ENCODE measurements at regions of chr15 and their contacts with region 1.

Region 1: GRCh38 chr15:86432861-86433260 is 353.2 kb downstream of the AGBL1 start:
- DNase-seq: no peak
- H3K4me3 ChIP-seq: no peak overlapping the region
- H3K27ac ChIP-seq: no peak overlapping the region
- H3K4me1 ChIP-seq: no peaks in the 10 kb centered on the region
- H3K27me3 ChIP-seq: no peaks in the 10 kb centered on the region
- CTCF ChIP-seq: no peak

Region 2: GRCh38 chr15:86373147-86373546 is 59.7 kb before region 1 on chr15:
- CTCF ChIA-PET with region 1: no interaction called
- POLR2A ChIA-PET with region 1: no interaction called
- intact Hi-C with region 1: loop called (anchors 10 kb)
- DNase-seq: no peak
- H3K4me3 ChIP-seq: no peak overlapping the region
- H3K27ac ChIP-seq: no peak overlapping the region
- H3K4me1 ChIP-seq: no peaks in the 10 kb centered on the region
- H3K27me3 ChIP-seq: no peaks in the 10 kb centered on the region
- CTCF ChIP-seq: no peak

Region 3: DNA sequence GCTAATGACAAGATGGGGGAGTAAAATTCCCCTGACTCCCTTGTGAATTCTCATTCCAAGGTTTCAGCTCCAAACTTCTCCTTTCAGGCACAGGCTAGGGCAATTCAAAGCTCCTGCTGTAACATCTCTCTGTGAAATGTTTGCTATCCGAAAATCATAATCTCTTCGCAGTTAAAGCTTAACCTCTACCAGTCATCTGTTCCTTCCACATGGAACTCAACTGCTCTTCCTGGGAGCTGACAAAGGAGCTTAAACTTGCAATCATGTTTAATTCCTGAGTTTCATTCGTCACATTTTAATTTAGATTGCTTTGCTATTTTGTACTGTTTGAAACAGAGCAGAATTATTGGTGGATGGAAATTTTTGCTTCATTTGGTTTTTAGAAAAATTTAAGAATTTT is 24.6 kb before region 1 on chr15:
- CTCF ChIA-PET with region 1: interaction called, 20 read pairs
- POLR2A ChIA-PET with region 1: no interaction called
- intact Hi-C with region 1: no loop called
- DNase-seq: no peak
- H3K4me3 ChIP-seq: no peak overlapping the region
- H3K27ac ChIP-seq: no peak overlapping the region
- H3K4me1 ChIP-seq: no peaks in the 10 kb centered on the region
- H3K27me3 ChIP-seq: no peaks in the 10 kb centered on the region
- CTCF ChIP-seq: no peak

Region 4: DNA sequence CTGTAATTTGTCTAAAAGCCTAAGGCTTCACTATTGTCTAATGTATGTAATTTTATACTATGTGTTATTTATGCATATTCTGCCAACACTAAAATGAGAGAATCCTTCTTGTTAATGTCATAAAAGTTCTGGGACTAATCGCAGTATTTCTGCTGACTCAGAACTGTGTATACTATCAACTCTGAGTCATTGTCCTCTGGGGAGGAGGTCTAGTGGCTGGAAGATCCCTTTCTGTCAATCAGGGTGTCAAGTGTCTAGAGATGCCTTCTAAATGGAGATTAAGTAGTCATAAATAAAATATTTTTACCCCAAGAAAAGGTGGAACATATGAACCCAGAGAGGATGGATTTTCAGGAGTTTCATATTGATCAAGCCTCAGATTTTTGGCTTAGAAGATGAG is 120.3 kb after region 1 on chr15:
- CTCF ChIA-PET with region 1: no interaction called
- POLR2A ChIA-PET with region 1: no interaction called
- intact Hi-C with region 1: no loop called
- DNase-seq: no peak
- H3K4me3 ChIP-seq: no peak overlapping the region
- H3K27ac ChIP-seq: no peak overlapping the region
- H3K4me1 ChIP-seq: no peaks in the 10 kb centered on the region
- H3K27me3 ChIP-seq: no peaks in the 10 kb centered on the region
- CTCF ChIP-seq: no peak

Measured in A673 (cell line).